ENCODE measurements at regions of chr4 and their contacts with region 1.

Region 1: GRCh38 chr4:153249199-153250041 is 45.2 kb downstream of the TRIM2 start:
- DNase-seq: peak; percentile 93

Region 2: DNA sequence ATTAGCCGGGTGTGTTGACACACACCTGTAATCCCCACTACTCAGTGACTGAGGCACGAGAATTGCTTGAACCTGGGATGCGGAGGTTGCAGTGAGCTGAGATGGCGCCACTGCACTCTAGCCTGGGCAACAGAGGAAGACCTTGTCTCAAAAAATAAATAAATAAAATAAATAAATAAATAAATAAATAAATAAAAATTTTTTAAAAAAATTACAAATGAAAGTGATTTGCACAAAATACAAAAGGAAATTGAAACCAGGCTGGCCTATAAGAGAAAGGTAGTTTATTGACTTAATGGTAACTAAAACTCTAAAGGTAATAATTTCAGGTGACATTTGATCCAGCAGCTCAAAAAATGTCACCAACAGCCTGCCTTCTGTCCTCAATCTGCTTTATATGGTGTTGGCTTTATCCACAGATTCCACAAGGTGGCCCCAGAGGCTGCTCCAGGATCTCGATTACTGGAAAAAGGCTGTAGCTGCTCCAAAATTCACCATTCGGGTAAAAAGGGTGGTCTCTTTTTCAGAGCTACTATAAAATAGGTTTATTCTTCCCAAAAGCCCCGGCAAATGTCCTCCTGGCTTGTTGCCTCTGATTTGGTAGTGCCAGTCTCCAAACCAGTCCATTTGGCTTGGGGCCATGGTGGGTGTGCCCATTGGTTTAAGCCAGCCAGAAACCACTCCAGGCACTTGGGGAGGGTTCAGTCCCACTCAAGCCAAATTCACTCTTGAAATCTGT is 106.6 kb before region 1 on chr4:
- CTCF ChIA-PET with region 1: interaction called, 11 read pairs
- POLR2A ChIA-PET with region 1: interaction called, 3 read pairs
- DNase-seq: peak; percentile 77

Region 3: GRCh38 chr4:153169776-153170175 is 79.6 kb before region 1 on chr4:
- CTCF ChIA-PET with region 1: no interaction called
- POLR2A ChIA-PET with region 1: no interaction called
- DNase-seq: no peak

Region 4: GRCh38 chr4:153204247-153205027 is 45.0 kb before region 1 on chr4 and contains the start of gene TRIM2:
- CTCF ChIA-PET with region 1: interaction called, 4 read pairs
- POLR2A ChIA-PET with region 1: interaction called, 18 read pairs
- DNase-seq: peak; percentile 56

Region 5: GRCh38 chr4:153221783-153222706 is 27.4 kb before region 1 on chr4:
- CTCF ChIA-PET with region 1: interaction called, 5 read pairs
- POLR2A ChIA-PET with region 1: interaction called, 14 read pairs
- DNase-seq: peak; percentile 55

Region 6: DNA sequence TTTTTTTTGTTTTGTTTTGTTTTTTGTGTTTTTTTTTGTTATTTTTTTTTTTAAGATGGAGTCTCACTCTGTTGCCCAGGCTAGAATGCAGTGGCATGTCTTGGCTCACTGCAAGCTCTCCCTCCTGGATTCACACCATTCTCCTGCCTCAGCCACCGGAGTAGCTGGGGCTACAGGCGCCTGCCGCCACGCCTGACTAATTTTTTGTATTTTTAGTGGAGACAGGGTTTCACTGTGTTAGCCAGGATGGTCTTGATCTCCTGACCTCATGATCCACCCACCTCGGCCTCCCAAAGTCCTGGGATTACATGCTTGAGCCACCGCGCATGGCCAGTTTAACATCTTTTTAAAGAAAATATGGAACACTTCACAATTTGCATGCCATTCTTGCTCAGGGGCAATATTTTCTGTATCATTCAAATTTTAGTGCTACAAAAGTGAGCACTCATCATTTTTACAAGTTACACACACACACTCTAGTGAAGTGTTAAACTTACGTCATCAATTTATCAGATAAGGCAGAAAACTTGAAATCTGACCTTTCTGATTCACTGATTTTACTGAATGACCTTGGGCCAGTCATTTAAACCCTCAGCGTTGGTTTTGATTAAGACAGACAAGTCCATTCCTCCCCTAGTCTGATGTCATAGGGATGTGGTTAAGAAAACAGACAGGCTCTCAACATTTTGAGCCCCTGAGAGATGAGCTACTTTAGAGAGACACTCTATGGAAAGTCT is 16.1 kb after region 1 on chr4:
- CTCF ChIA-PET with region 1: no interaction called
- POLR2A ChIA-PET with region 1: interaction called, 14 read pairs
- DNase-seq: no peak